CD4-positive, alpha-beta T cell (primary cell): ENCODE measurements at regions of chr4 and their contacts with region 1.

Region 1: DNA sequence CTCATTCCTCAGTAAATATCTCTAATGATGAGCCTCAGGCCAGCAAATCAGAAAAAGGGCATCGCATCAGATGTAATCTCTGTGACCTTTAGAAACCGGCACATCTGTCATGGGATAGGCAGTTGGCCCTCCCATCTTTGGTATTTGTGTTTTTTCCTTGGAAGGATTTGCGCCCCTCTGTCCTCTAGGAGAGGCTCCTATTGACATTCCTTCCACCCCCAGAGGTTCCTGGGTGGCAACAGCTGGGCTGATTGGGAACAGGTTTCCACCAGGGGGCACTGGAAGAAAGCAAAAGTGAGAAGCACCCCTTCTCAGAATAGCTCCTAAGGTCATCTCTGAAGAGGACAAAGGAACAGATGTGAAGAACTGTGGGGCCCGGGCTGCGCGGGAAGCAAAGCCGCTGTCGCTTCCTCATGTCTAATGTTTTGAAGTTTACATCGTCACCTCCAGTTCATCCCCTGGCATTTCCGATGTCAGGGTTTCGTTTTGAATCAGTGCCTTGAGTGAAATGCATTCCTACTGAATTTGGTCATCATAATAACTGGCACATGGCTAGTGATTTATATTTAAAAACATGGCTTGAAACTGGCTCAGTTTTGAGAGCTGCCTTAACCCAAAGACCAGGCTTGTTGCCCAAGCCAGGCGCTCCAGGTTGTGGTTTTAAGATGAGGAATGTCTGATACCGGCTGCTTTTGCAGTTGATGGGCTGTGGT is 6.2 kb downstream of the TXK start:
- DNase-seq: peak; percentile 46 to 83 (median 66)
- ATAC-seq: peak; percentile 78
- H3K4me3 ChIP-seq: peak overlapping the region; percentile 33
- H3K4me3 Mint-ChIP-seq: peak overlapping the region; percentile 86
- H3K27ac ChIP-seq: peak overlapping the region; percentile 70 to 80
- H3K27ac Mint-ChIP-seq: peak overlapping the region; percentile 88
- H3K4me1 ChIP-seq: peaks cover 78% of the 10 kb centered on the region
- H3K4me1 Mint-ChIP-seq: peaks cover 87% of the 10 kb centered on the region
- H3K27me3 ChIP-seq: no peaks in the 10 kb centered on the region
- H3K27me3 Mint-ChIP-seq: no peaks in the 10 kb centered on the region
- CTCF ChIP-seq: peak; percentile 61

Region 2: GRCh38 chr4:47882228-47882627 is 245.6 kb before region 1 on chr4:
- CTCF ChIA-PET with region 1: no interaction called
- POLR2A ChIA-PET with region 1: no interaction called
- intact Hi-C with region 1: no loop called
- DNase-seq: no peak
- ATAC-seq: no peak
- H3K4me3 ChIP-seq: no peak overlapping the region
- H3K4me3 Mint-ChIP-seq: no peak overlapping the region
- H3K27ac ChIP-seq: no peak overlapping the region
- H3K27ac Mint-ChIP-seq: no peak overlapping the region
- H3K4me1 ChIP-seq: no peaks in the 10 kb centered on the region
- H3K4me1 Mint-ChIP-seq: no peaks in the 10 kb centered on the region
- H3K27me3 ChIP-seq: no peaks in the 10 kb centered on the region
- H3K27me3 Mint-ChIP-seq: no peaks in the 10 kb centered on the region
- CTCF ChIP-seq: no peak

Region 3: DNA sequence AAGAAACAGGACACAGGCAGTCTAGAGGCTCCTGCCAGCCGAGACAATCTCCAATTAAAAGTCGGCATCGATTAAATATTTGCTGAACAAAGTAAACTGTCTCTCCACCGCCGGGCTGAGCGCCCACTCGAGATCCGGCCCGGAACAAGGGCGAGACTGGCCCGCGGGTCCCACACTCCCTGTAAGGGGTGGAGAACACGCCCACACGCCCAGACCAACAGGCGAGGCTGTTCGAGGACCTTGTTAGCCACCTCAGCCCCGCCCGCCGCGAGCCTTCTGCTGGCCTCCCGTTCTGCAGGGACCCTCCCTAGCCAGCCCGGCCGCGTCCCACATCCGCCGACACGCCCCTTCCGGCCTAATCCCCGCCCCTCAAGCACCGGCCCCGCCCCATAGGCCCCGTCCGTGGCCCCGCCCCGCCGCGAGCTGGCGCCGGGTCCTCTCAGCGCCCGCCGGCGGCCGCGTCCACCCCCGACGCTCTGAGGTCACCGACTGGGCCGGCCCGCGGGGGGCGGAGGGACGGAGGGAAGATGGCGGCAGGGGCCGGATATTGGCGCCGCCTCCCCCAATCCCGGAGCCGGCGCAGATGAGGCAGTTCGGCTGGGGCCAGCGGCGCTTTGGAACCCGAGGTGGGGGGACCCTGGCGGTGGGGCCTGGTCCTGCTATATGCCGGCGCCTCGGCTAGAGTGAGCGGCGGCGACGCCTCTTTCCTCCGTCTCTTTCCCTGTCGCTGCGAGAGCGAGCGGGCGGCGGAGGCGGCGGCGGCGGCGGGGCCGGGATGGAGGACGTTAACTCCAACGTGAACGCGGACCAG is 213.3 kb after region 1 on chr4 and contains the start of gene SLAIN2:
- CTCF ChIA-PET with region 1: interaction called, 3 read pairs
- POLR2A ChIA-PET with region 1: no interaction called
- intact Hi-C with region 1: loop called in 1 of 2 experiments (anchors 10 kb)
- DNase-seq: peak; percentile 92 to 100 (median 98)
- ATAC-seq: peak; percentile 81
- H3K4me3 ChIP-seq: peak within 1 kb of the TSS; percentile 82
- H3K4me3 Mint-ChIP-seq: peak within 1 kb of the TSS; percentile 100
- H3K27ac ChIP-seq: peak within 1 kb of the TSS; percentile 91 to 95
- H3K27ac Mint-ChIP-seq: peak within 1 kb of the TSS; percentile 98
- H3K4me1 ChIP-seq: peaks cover 18% of the 10 kb centered on the region
- H3K4me1 Mint-ChIP-seq: peaks cover 54% of the 10 kb centered on the region
- H3K27me3 ChIP-seq: no peaks in the 10 kb centered on the region
- H3K27me3 Mint-ChIP-seq: no peaks in the 10 kb centered on the region
- CTCF ChIP-seq: peak; percentile 36
- total RNA-seq, gene SLAIN2: 46.3 to 47.0 TPM